A549 (cell line): ENCODE measurements at regions of chr11 and their contacts with region 1.

Region 1: GRCh38 chr11:43852057-43852636 is 28.5 kb upstream of the ALKBH3 start:
- DNase-seq: peak; percentile 75 to 79
- ATAC-seq: peak; percentile 88 to 97
- H3K4me3 ChIP-seq: no peak overlapping the region
- H3K27ac ChIP-seq: no peak overlapping the region
- H3K4me1 ChIP-seq: no peaks in the 10 kb centered on the region
- CTCF ChIP-seq: peak; percentile 81
- EP300 ChIP-seq: no peak
- POLR2A ChIP-seq: no peak
- RAD21 ChIP-seq: peak; percentile 88

Region 2: DNA sequence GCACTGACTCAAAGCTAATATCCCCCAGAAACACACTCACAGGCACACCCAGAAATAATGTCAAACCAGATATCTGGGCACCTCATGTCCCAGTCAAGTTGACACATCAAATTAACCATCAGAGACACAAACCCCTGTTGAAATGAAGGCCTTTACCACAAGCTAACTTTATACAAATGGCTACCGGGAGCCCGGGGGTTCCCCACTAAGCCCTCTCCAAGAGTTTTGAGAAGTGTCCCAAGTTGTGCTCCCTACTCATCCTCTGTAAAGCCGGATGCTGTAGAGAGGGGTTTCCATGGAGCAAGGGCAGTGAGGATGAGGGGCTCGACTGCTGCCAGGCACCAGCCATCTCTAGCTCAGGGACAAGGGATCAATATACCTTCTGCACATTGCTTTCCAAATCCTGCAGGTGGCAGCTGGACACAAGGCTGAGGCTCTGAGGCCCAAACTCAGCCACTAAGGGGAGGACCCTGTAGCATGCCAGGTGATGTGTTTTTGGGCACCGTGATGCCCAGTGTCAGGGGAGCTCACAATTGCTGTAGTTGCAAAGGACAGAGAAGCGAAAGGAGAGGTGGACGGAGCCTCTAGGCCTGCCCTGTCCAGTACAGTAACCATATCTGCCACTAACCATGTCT is 347.7 kb before region 1 on chr11:
- CTCF ChIA-PET with region 1: interaction called, 11 read pairs
- POLR2A ChIA-PET with region 1: no interaction called
- DNase-seq: peak; percentile 28 to 39
- ATAC-seq: peak; percentile 80 to 84; a peak in 5 of 6 replicates
- H3K4me3 ChIP-seq: no peak overlapping the region
- H3K27ac ChIP-seq: no peak overlapping the region
- H3K4me1 ChIP-seq: no peaks in the 10 kb centered on the region
- CTCF ChIP-seq: no peak
- EP300 ChIP-seq: no peak
- POLR2A ChIP-seq: no peak
- RAD21 ChIP-seq: peak; percentile 47 to 65; a peak in 4 of 5 replicates

Region 3: GRCh38 chr11:43576803-43577521 is 275.2 kb before region 1 on chr11:
- CTCF ChIA-PET with region 1: interaction called, 14 read pairs
- POLR2A ChIA-PET with region 1: no interaction called
- DNase-seq: peak; percentile 62 to 66
- ATAC-seq: peak in 1 of 2 experiments; percentile 42; a peak in 3 of 6 replicates
- H3K4me3 ChIP-seq: peak overlapping the region; percentile 16; the same call in 2 of the 3 replicates
- H3K27ac ChIP-seq: no peak overlapping the region
- H3K4me1 ChIP-seq: peaks cover 39% of the 10 kb centered on the region; the same call in 2 of the 3 replicates
- CTCF ChIP-seq: no peak
- EP300 ChIP-seq: no peak
- POLR2A ChIP-seq: no peak
- RAD21 ChIP-seq: no peak

Region 4: DNA sequence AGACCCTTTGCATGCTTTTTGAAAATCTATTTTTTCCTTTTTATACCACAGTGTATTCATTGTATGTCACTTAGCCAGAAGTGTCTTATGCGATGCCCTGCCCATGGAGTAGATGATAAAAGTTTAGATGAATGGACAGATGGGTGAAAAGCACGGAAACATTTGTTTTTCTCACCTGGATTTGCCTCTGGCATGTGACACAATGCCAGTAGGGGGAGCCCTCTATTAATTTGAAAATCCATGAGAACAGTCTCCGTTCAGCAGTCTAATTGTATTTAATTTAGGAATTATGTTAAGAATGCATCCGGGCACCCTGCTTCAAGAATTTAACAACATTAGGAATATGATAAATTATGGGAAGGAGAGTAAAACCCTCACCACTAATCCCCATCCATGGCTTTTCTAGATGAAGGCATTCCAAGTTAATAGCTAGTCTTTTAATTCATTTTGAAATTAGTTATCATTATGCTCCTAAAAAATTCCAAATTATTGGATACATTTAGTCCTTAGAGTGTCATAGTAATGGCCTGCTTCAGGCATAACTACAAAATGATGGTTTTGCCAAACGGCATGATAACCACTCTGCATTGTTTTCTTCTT is 26.8 kb before region 1 on chr11:
- CTCF ChIA-PET with region 1: interaction called, 78 read pairs
- POLR2A ChIA-PET with region 1: no interaction called
- DNase-seq: peak; percentile 10 to 31
- ATAC-seq: peak; percentile 30 to 70; a peak in 5 of 6 replicates
- H3K4me3 ChIP-seq: no peak overlapping the region
- H3K27ac ChIP-seq: no peak overlapping the region
- H3K4me1 ChIP-seq: peaks cover 7% of the 10 kb centered on the region; the same call in 2 of the 3 replicates
- CTCF ChIP-seq: peak; percentile 84
- EP300 ChIP-seq: no peak
- POLR2A ChIP-seq: no peak
- RAD21 ChIP-seq: peak; percentile 61 to 68

Region 5: GRCh38 chr11:43830928-43831440 is 21.2 kb before region 1 on chr11:
- CTCF ChIA-PET with region 1: interaction called, 78 read pairs
- POLR2A ChIA-PET with region 1: no interaction called
- DNase-seq: peak; percentile 84 to 90
- ATAC-seq: peak; percentile 100
- H3K4me3 ChIP-seq: no peak overlapping the region
- H3K27ac ChIP-seq: 0 out of 6 replicates have a peak overlapping the region, but pooled peaks have one; percentile 17 to 22
- H3K4me1 ChIP-seq: peaks cover 19% of the 10 kb centered on the region
- CTCF ChIP-seq: no peak
- EP300 ChIP-seq: no peak
- POLR2A ChIP-seq: no peak
- RAD21 ChIP-seq: no peak

Region 6: DNA sequence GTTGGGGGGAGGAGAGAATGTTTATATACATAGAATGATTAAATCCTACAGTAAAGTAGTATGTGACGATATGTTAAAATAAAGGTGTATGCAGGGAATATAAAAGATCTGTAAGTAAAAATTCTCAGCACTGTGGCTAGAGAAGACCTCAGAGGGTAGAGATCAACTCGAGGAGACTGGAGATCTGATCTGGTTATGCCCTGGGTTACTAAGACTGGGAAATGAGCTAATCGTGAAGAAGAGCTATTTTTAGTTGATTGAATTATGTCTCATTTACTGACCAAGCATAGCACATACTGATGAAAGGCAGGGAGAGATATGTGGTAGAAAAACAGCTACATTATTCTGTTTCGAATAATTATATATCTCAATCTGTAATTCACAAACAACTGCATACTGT is 14.3 kb before region 1 on chr11:
- CTCF ChIA-PET with region 1: interaction called, 61 read pairs
- POLR2A ChIA-PET with region 1: interaction called, 4 read pairs
- DNase-seq: no peak
- ATAC-seq: no peak
- H3K4me3 ChIP-seq: no peak overlapping the region
- H3K27ac ChIP-seq: no peak overlapping the region
- H3K4me1 ChIP-seq: no peaks in the 10 kb centered on the region
- CTCF ChIP-seq: no peak
- EP300 ChIP-seq: no peak
- POLR2A ChIP-seq: no peak
- RAD21 ChIP-seq: no peak

Region 7: GRCh38 chr11:43868852-43869567 is 16.9 kb after region 1 on chr11:
- CTCF ChIA-PET with region 1: interaction called, 14 read pairs
- POLR2A ChIA-PET with region 1: no interaction called
- DNase-seq: peak in 1 of 2 experiments; percentile 10
- ATAC-seq: peak; percentile 23 to 50; a peak in 3 of 6 replicates
- H3K4me3 ChIP-seq: no peak overlapping the region
- H3K27ac ChIP-seq: no peak overlapping the region
- H3K4me1 ChIP-seq: no peaks in the 10 kb centered on the region
- CTCF ChIP-seq: no peak
- EP300 ChIP-seq: no peak
- POLR2A ChIP-seq: no peak
- RAD21 ChIP-seq: no peak